Posterior vena cava (tissue), 2 donors: ENCODE measurements at regions of chrX and their contacts with region 1.

Region 1: DNA sequence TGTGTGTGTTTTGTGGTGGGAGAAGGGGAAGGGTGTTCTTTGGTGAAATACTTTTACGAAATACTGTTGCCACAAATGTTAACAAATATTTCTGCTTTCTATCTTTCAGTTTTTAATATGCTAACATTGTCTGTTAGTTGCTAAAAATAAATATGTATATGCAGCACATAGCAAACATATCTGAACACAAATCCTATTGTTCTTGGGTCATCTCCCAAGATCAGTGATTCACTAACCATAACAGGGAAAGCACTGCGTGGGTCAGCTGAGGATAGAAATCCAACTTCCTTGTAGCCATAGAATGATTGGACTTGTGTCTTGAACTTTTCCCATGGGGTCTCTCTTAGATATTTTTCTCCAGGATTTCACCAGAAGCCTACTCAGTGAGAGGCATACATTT is 250.3 kb upstream of the FAM47A start:
- DNase-seq: no peak

Region 2: GRCh38 chrX:35868501-35868900 is 1486.1 kb after region 1 on chrX:
- intact Hi-C with region 1: loop called in 1 of 2 experiments (anchors 5 kb)
- DNase-seq: no peak